ENCODE measurements at regions of chr4 and their contacts with region 1.

Region 1: DNA sequence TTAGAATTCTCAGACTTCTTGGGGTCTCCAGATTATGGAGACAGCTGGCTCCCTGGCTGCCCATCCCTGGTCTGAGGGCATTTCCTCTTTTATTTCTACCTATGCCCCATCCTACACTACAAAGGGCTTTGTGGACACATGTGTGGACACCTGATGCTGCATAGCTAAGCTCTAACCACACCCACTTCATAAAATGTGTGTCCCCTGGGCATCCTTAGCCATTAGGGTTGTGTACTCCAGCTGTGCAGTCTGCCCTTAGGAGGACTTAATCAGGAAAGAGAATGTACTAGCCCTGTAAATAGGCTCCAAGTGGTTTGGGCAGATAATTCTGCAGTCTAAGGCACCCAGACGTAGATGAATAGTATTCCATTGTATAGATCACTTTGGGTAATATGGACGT is 47.0 kb downstream of the COQ2 start:
- DNase-seq: no peak
- ATAC-seq: no peak
- H3K4me3 Mint-ChIP-seq: no peak overlapping the region
- H3K27ac Mint-ChIP-seq: no peak overlapping the region
- H3K4me1 Mint-ChIP-seq: peaks cover 42% of the 10 kb centered on the region
- H3K27me3 Mint-ChIP-seq: peaks cover 5% of the 10 kb centered on the region
- CTCF ChIP-seq: no peak

Region 2: GRCh38 chr4:83217721-83218522 is 19.7 kb before region 1 on chr4:
- CTCF ChIA-PET with region 1: interaction called, 16 read pairs
- POLR2A ChIA-PET with region 1: interaction called, 11 read pairs
- intact Hi-C with region 1: no loop called
- DNase-seq: peak; percentile 82
- ATAC-seq: peak; percentile 86
- H3K4me3 Mint-ChIP-seq: peak overlapping the region; percentile 67
- H3K27ac Mint-ChIP-seq: peak overlapping the region; percentile 91
- H3K4me1 Mint-ChIP-seq: peaks cover 72% of the 10 kb centered on the region
- H3K27me3 Mint-ChIP-seq: no peaks in the 10 kb centered on the region
- CTCF ChIP-seq: no peak

Region 3: GRCh38 chr4:83252782-83253405 is 15.3 kb after region 1 on chr4:
- CTCF ChIA-PET with region 1: interaction called, 22 read pairs
- POLR2A ChIA-PET with region 1: interaction called, 3 read pairs
- intact Hi-C with region 1: no loop called
- DNase-seq: peak; percentile 84
- ATAC-seq: peak; percentile 88
- H3K4me3 Mint-ChIP-seq: no peak overlapping the region
- H3K27ac Mint-ChIP-seq: no peak overlapping the region
- H3K4me1 Mint-ChIP-seq: peaks cover 21% of the 10 kb centered on the region
- H3K27me3 Mint-ChIP-seq: no peaks in the 10 kb centered on the region
- CTCF ChIP-seq: peak; percentile 90

Measured in activated CD8-positive, alpha-beta T cell treated with anti-CD3 and anti-CD28 coated beads for 36 hours (primary cell).